Activated B cell treated with CpG ODN at 0.5 μM for 24 hours (primary cell): ENCODE measurements at regions of chr20 and their contacts with region 1.

Region 1: GRCh38 chr20:13784893-13785715 is at the starts of genes ESF1 and NDUFAF5:
- DNase-seq: peak; percentile 88
- ATAC-seq: peak; percentile 98
- H3K4me3 Mint-ChIP-seq: peak within 1 kb of the TSS; percentile 94
- H3K27ac Mint-ChIP-seq: peak within 1 kb of the TSS; percentile 90
- H3K4me1 Mint-ChIP-seq: peaks cover 53% of the 10 kb centered on the region
- H3K27me3 Mint-ChIP-seq: no peaks in the 10 kb centered on the region
- CTCF ChIP-seq: no peak
- total RNA-seq, gene ESF1: 15.5 and 15.8 TPM in 2 replicates
- total RNA-seq, gene NDUFAF5: 22.7 and 29.8 TPM in 2 replicates

Region 2: DNA sequence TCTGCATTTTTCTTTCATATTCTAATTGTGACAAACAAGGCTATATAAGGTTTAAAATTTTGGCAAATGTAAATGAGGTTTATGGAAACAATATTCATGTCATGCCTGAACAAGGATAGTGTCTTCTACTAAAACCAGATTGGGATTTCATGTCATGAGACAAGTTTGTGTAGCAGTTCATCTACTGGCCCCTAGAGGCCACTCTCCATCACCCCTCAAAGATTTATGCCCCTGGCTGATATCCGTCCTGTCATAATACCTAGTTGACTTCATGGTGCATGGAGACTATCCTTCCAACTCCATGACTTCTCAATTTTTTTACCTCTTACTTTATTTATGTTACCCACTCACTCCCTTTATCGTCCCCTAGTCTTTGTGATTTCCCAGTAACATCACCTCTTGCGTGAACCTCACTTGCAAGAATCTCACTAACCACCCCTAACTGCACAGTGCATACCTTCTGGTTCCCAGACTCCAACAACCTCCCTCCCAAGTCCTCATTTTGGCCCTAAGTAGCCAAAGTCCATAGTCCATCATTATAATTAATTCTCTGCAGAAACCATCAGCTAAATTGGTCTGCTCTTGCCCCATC is 326.1 kb before region 1 on chr20:
- CTCF ChIA-PET with region 1: interaction called, 5 read pairs
- POLR2A ChIA-PET with region 1: no interaction called
- intact Hi-C with region 1: loop called (anchors 1 kb)
- DNase-seq: no peak
- ATAC-seq: peak; percentile 54
- H3K4me3 Mint-ChIP-seq: no peak overlapping the region
- H3K27ac Mint-ChIP-seq: no peak overlapping the region
- H3K4me1 Mint-ChIP-seq: no peaks in the 10 kb centered on the region
- H3K27me3 Mint-ChIP-seq: no peaks in the 10 kb centered on the region
- CTCF ChIP-seq: no peak

Region 3: DNA sequence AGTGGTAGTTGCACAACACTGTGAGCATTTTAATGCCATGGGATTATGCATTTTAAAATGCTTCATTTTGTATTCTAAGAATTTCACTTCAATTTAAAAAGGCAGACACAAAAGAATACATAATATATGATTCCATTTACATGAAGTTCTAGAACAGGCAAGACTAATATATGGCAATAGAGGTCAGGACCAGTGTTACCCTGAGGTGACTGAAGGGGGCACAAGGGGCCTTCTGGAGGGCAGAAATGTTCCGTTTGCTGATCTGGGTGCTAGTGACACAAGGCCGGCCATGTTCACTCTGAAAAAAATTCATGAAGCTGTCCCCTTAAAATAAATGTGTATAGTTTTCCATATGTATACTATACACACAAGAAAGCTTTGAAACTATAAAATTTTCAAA is 174.9 kb before region 1 on chr20:
- CTCF ChIA-PET with region 1: interaction called, 9 read pairs
- POLR2A ChIA-PET with region 1: no interaction called
- intact Hi-C with region 1: loop called (anchors 5 kb)
- DNase-seq: no peak
- ATAC-seq: peak; percentile 47
- H3K4me3 Mint-ChIP-seq: no peak overlapping the region
- H3K27ac Mint-ChIP-seq: no peak overlapping the region
- H3K4me1 Mint-ChIP-seq: peaks cover 1% of the 10 kb centered on the region
- H3K27me3 Mint-ChIP-seq: no peaks in the 10 kb centered on the region
- CTCF ChIP-seq: no peak

Region 4: GRCh38 chr20:13638496-13639222 is 146.4 kb before region 1 on chr20 and contains the start of gene TASP1:
- CTCF ChIA-PET with region 1: no interaction called
- POLR2A ChIA-PET with region 1: no interaction called
- intact Hi-C with region 1: loop called (anchors 1 kb)
- DNase-seq: peak; percentile 87
- ATAC-seq: peak; percentile 97
- H3K4me3 Mint-ChIP-seq: peak within 1 kb of the TSS; percentile 90
- H3K27ac Mint-ChIP-seq: peak within 1 kb of the TSS; percentile 87
- H3K4me1 Mint-ChIP-seq: peaks cover 14% of the 10 kb centered on the region
- H3K27me3 Mint-ChIP-seq: peaks cover 18% of the 10 kb centered on the region
- CTCF ChIP-seq: no peak
- total RNA-seq, gene TASP1: 17.6 and 20.6 TPM in 2 replicates